Activated CD4-positive, alpha-beta T cell treated with anti-CD3 and anti-CD28 coated beads for 36 hours (primary cell): ENCODE measurements at regions of chr3 and their contacts with region 1.

Region 1: GRCh38 chr3:183468424-183468823 is 40.0 kb upstream of the MCF2L2 start:
- DNase-seq: no peak
- ATAC-seq: peak; percentile 77
- H3K4me3 Mint-ChIP-seq: no peak overlapping the region
- H3K27ac Mint-ChIP-seq: peak overlapping the region; percentile 84
- H3K4me1 Mint-ChIP-seq: peaks cover 26% of the 10 kb centered on the region
- H3K27me3 Mint-ChIP-seq: no peaks in the 10 kb centered on the region

Region 2: GRCh38 chr3:183210839-183211341 is 257.5 kb before region 1 on chr3:
- CTCF ChIA-PET with region 1: no interaction called
- POLR2A ChIA-PET with region 1: no interaction called
- intact Hi-C with region 1: no loop called
- DNase-seq: peak; percentile 68
- ATAC-seq: peak; percentile 66
- H3K4me3 Mint-ChIP-seq: no peak overlapping the region
- H3K27ac Mint-ChIP-seq: peak overlapping the region; percentile 72
- H3K4me1 Mint-ChIP-seq: peaks cover 63% of the 10 kb centered on the region
- H3K27me3 Mint-ChIP-seq: no peaks in the 10 kb centered on the region

Region 3: GRCh38 chr3:183427876-183428446 is 40.5 kb before region 1 on chr3:
- CTCF ChIA-PET with region 1: interaction called, 6 read pairs
- POLR2A ChIA-PET with region 1: interaction called, 4 read pairs
- intact Hi-C with region 1: loop called in 1 of 2 experiments (anchors 1 kb)
- DNase-seq: peak; percentile 57
- ATAC-seq: peak; percentile 21
- H3K4me3 Mint-ChIP-seq: peak overlapping the region; percentile 79
- H3K27ac Mint-ChIP-seq: no peak overlapping the region
- H3K4me1 Mint-ChIP-seq: peaks cover 43% of the 10 kb centered on the region
- H3K27me3 Mint-ChIP-seq: peaks cover 11% of the 10 kb centered on the region

Region 4: GRCh38 chr3:183481582-183481981 is 13.2 kb after region 1 on chr3:
- CTCF ChIA-PET with region 1: interaction called, 21 read pairs
- POLR2A ChIA-PET with region 1: no interaction called
- intact Hi-C with region 1: no loop called
- DNase-seq: peak; percentile 50
- ATAC-seq: peak; percentile 81
- H3K4me3 Mint-ChIP-seq: no peak overlapping the region
- H3K27ac Mint-ChIP-seq: peak overlapping the region; percentile 34
- H3K4me1 Mint-ChIP-seq: peaks cover 14% of the 10 kb centered on the region
- H3K27me3 Mint-ChIP-seq: no peaks in the 10 kb centered on the region

Region 5: DNA sequence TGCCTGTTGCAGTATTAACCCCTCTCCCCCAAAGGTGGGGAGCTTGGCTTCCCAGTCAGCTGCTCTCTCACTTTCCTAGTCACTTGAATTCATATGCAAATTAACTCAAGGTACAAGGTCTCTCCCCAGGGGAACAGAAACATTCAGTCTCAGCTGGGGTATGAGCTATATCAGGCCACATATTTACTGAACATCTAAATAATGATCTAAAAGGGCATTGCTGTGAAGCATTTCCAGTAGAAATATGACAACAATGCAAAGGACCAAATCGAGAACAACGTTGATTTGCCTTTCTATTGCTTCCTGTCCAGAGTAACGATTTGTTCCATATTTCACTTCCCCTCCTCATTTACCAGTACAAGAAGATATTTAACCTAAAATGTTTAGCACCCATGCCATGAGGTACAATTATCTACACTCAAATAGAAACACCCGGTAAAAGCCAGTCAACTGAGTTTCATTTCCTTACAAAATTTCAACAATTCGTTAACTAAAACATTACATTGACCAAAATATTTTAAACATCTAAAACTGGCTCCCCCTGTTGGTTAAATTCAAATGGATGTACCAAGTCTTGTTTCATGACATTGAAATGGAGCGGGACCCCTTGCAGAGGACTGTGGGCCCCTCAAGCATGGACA is 123.6 kb after region 1 on chr3:
- CTCF ChIA-PET with region 1: interaction called, 3 read pairs
- POLR2A ChIA-PET with region 1: no interaction called
- intact Hi-C with region 1: loop called in 1 of 2 experiments (anchors 1 kb)
- DNase-seq: no peak
- ATAC-seq: peak; percentile 48
- H3K4me3 Mint-ChIP-seq: no peak overlapping the region
- H3K27ac Mint-ChIP-seq: peak overlapping the region; percentile 75
- H3K4me1 Mint-ChIP-seq: peaks cover 42% of the 10 kb centered on the region
- H3K27me3 Mint-ChIP-seq: no peaks in the 10 kb centered on the region

Region 6: GRCh38 chr3:183766745-183767606 is 298.6 kb after region 1 on chr3:
- CTCF ChIA-PET with region 1: interaction called, 14 read pairs
- POLR2A ChIA-PET with region 1: no interaction called
- intact Hi-C with region 1: loop called (anchors 1 kb)
- DNase-seq: peak; percentile 85
- ATAC-seq: peak; percentile 95
- H3K4me3 Mint-ChIP-seq: no peak overlapping the region
- H3K27ac Mint-ChIP-seq: no peak overlapping the region
- H3K4me1 Mint-ChIP-seq: peaks cover 9% of the 10 kb centered on the region
- H3K27me3 Mint-ChIP-seq: no peaks in the 10 kb centered on the region